ENCODE measurements at regions of chr13 and their contacts with region 1.

Region 1: GRCh38 chr13:36346222-36347083 is at the start of gene SPART:
- DNase-seq: peak; percentile 66 to 83
- ATAC-seq: peak; percentile 86 to 95
- H3K4me3 ChIP-seq: peak within 1 kb of the TSS; percentile 85
- H3K27ac ChIP-seq: peak within 1 kb of the TSS; percentile 97
- H3K4me1 ChIP-seq: peaks cover 20% of the 10 kb centered on the region
- CTCF ChIP-seq: peak; percentile 70
- EP300 ChIP-seq: no peak
- POLR2A ChIP-seq: no peak; the same call in 1 of the 2 replicates
- RAD21 ChIP-seq: peak; percentile 68 to 69
- polyA plus RNA-seq, gene SPART: 36.8 and 37.0 TPM in 2 replicates

Region 2: GRCh38 chr13:36362251-36362650 is 15.8 kb after region 1 on chr13:
- CTCF ChIA-PET with region 1: interaction called, 11 read pairs
- POLR2A ChIA-PET with region 1: no interaction called
- DNase-seq: peak in 1 of 2 experiments; percentile 4
- ATAC-seq: peak; percentile 40 to 73; a peak in 4 of 6 replicates
- H3K4me3 ChIP-seq: no peak overlapping the region
- H3K27ac ChIP-seq: no peak overlapping the region
- H3K4me1 ChIP-seq: no peaks in the 10 kb centered on the region
- CTCF ChIP-seq: no peak
- EP300 ChIP-seq: no peak
- POLR2A ChIP-seq: no peak
- RAD21 ChIP-seq: no peak

Region 3: GRCh38 chr13:36414461-36414860 is 68.0 kb after region 1 on chr13:
- CTCF ChIA-PET with region 1: no interaction called
- POLR2A ChIA-PET with region 1: no interaction called
- DNase-seq: no peak
- ATAC-seq: no peak
- H3K4me3 ChIP-seq: no peak overlapping the region
- H3K27ac ChIP-seq: no peak overlapping the region
- H3K4me1 ChIP-seq: no peaks in the 10 kb centered on the region
- CTCF ChIP-seq: no peak
- EP300 ChIP-seq: no peak
- POLR2A ChIP-seq: no peak
- RAD21 ChIP-seq: no peak

Region 4: DNA sequence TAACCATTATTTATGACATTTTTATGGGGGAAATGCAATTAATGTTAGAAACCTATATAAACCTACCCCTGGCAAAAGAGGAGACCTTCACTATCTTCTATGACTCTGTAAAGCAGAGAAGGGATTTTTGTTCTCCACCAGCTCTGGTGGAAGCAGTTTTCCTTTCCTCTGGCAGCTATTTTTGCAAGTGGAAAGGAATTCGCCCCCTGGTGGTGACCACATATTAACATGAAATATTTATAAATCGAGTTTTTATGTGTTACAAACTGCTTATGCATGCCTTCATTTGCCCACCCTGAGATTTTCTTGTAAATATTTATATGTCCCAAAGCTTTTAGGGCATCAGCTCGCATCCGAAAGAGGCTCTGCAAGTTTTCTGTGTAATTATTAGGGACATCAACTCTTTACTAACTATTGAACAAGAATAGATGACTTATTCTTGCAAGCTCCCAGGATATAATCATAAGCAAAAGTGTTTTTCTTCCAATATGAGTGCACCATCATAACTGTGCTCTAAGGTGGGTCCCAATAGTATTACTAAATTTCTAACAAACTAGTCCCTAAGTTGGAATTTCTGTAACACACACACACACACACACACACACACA is 389.8 kb after region 1 on chr13:
- CTCF ChIA-PET with region 1: interaction called, 10 read pairs
- POLR2A ChIA-PET with region 1: no interaction called
- DNase-seq: peak; percentile 8 to 50
- ATAC-seq: no peak
- H3K4me3 ChIP-seq: no peak overlapping the region
- H3K27ac ChIP-seq: no peak overlapping the region
- H3K4me1 ChIP-seq: no peaks in the 10 kb centered on the region
- CTCF ChIP-seq: peak; percentile 51
- EP300 ChIP-seq: no peak
- POLR2A ChIP-seq: no peak
- RAD21 ChIP-seq: peak; percentile 41 to 44

Region 5: GRCh38 chr13:36903925-36904595 is 557.6 kb after region 1 on chr13:
- CTCF ChIA-PET with region 1: no interaction called
- POLR2A ChIA-PET with region 1: no interaction called
- DNase-seq: no peak
- ATAC-seq: no peak
- H3K4me3 ChIP-seq: no peak overlapping the region
- H3K27ac ChIP-seq: no peak overlapping the region
- H3K4me1 ChIP-seq: no peaks in the 10 kb centered on the region
- CTCF ChIP-seq: no peak
- EP300 ChIP-seq: no peak
- POLR2A ChIP-seq: no peak
- RAD21 ChIP-seq: no peak